Panc1 (cell line): ENCODE measurements at regions of chr1 and their contacts with region 1.

Region 1: GRCh38 chr1:169809370-169810095 is 14.8 kb upstream of the METTL18 start:
- DNase-seq: no peak
- ATAC-seq: peak; percentile 71; the same call in 1 of the 2 replicates
- H3K4me3 ChIP-seq: no peak overlapping the region
- H3K27ac ChIP-seq: no peak overlapping the region
- H3K4me1 ChIP-seq: no peaks in the 10 kb centered on the region
- H3K27me3 ChIP-seq: no peaks in the 10 kb centered on the region
- CTCF ChIP-seq: peak; percentile 73

Region 2: DNA sequence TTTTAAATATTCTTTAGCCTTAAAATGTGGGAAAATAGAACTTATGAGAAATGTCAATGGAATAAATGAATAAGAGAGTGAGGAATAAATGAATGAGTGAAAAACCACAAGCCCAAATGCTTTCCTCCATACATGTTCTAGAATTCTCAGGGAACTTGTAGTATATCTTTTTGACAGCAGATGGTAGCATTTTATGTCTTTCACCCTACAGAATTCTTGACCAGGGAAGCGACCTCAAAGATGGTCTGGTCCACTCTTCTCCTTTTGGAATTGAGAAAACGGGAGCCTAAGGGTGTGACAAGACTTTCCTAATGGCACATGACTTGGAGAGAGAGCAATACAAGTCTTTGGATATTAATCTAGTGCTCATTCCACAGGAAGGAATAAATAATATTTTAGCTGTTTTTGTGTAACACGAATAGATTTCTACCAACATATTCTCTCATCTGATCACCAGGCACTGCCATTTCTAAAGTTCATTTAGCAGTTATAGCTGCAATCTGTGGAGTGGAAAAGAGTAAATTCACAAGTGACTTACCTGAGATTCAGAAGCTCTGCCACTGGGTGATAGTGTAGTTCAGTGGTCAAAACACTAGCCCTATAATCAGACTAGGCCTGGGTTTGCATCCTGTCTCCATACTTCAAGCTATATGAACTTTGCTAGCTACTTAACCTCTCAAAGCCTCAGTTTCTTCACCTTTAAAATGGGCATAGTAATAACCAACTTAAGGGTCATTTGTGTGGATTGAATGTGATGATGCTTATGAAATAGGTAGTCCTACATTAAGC is 208.2 kb before region 1 on chr1:
- CTCF ChIA-PET with region 1: no interaction called
- POLR2A ChIA-PET with region 1: no interaction called
- in situ Hi-C with region 1: no loop called
- intact Hi-C with region 1: loop called (anchors 5 kb)
- DNase-seq: no peak
- ATAC-seq: no peak
- H3K4me3 ChIP-seq: no peak overlapping the region
- H3K27ac ChIP-seq: no peak overlapping the region
- H3K4me1 ChIP-seq: no peaks in the 10 kb centered on the region
- H3K27me3 ChIP-seq: no peaks in the 10 kb centered on the region; the same call in 1 of the 2 replicates
- CTCF ChIP-seq: peak; percentile 48; the same call in 1 of the 2 replicates

Region 3: GRCh38 chr1:170402476-170403311 is 593.2 kb after region 1 on chr1:
- CTCF ChIA-PET with region 1: no interaction called
- POLR2A ChIA-PET with region 1: no interaction called
- in situ Hi-C with region 1: no loop called
- intact Hi-C with region 1: no loop called
- DNase-seq: no peak
- ATAC-seq: no peak
- H3K4me3 ChIP-seq: no peak overlapping the region
- H3K27ac ChIP-seq: no peak overlapping the region
- H3K4me1 ChIP-seq: no peaks in the 10 kb centered on the region
- H3K27me3 ChIP-seq: no peaks in the 10 kb centered on the region
- CTCF ChIP-seq: no peak